Posterior cingulate gyrus (tissue), 11 donors: ENCODE measurements at regions of chr13 and their contacts with region 1.

Region 1: DNA sequence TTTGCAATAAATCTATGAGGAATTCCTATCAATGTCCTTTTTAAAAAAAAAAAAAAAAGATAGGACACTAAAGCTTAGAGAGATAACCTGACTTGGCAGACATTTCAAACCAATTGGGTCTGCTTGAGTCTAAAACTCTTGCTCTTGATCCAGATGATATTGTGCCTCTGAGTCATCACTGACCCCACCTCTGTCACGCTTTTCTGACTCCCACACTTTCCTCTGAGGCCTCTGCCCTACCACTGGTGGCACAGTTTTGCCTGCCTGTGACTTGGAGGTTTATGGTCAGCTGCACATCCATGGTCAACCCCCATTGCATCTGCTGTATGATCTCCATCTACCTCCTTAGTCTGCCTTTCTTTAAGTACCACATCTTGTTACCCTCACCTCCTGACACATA is 328.7 kb downstream of the SPRY2 start:
- DNase-seq: peak in 1 of 10 donors; percentile 59

Region 2: GRCh38 chr13:79833991-79834390 is 178.3 kb before region 1 on chr13:
- intact Hi-C with region 1: no loop called
- DNase-seq: no peak

Region 3: DNA sequence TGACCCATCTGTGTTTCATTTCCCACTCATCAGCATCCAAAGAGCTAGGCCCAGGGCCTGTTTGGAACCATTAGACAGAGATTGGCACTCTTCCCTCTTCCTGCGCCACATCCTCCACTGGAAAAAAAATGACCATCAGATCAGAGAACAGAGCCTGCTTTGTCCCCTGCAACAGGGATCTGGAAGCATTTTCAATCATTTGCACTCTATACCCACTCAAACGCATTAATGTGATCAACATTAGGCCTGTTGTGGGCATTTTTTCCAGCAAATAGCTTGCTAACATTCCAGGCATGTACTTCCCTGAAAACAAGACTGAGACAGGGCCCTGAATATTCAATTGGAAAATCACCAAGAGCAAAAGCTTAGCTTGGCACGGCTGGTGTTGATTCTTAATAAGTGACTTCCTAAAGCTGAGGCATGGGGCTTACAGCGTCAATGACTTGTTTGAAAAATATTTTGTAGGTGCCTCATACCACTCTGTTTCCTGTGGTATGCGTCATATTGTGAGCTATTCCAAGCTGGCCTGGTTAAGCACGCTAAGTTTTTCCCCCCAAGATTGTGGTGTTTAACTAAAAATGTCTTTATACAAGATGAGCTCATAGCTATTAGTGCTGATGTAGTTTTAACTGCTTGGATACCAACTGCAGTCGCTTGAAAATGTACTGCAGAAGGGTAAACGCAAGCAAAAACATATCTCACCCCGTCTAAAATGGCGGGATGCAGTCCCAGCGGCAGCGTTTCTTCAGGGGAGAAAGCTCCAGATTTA is 75.7 kb before region 1 on chr13:
- intact Hi-C with region 1: loop called (anchors 5 kb)
- DNase-seq: peak in 8 of 10 donors; percentile 21 to 82 (median 52)

Region 4: GRCh38 chr13:80132741-80133601 is 120.7 kb after region 1 on chr13:
- intact Hi-C with region 1: loop called (anchors 10 kb)
- DNase-seq: peak; percentile 41 to 92 (median 66)